ENCODE measurements at regions of chr20 and their contacts with region 1.

Region 1: GRCh38 chr20:17898548-17898994 is 70.0 kb downstream of the SNX5 start:
- DNase-seq: peak; percentile 64
- H3K4me3 ChIP-seq: no peak overlapping the region
- H3K27ac ChIP-seq: no peak overlapping the region
- H3K4me1 ChIP-seq: peaks cover 39% of the 10 kb centered on the region
- H3K27me3 ChIP-seq: no peaks in the 10 kb centered on the region
- CTCF ChIP-seq: peak; percentile 95

Region 2: GRCh38 chr20:17536944-17537444 is 361.6 kb before region 1 on chr20:
- intact Hi-C with region 1: loop called (anchors 10 kb)
- DNase-seq: peak; percentile 48
- H3K4me3 ChIP-seq: no peak overlapping the region
- H3K27ac ChIP-seq: no peak overlapping the region
- H3K4me1 ChIP-seq: peaks cover 1% of the 10 kb centered on the region
- H3K27me3 ChIP-seq: no peaks in the 10 kb centered on the region
- CTCF ChIP-seq: peak; percentile 93

Region 3: DNA sequence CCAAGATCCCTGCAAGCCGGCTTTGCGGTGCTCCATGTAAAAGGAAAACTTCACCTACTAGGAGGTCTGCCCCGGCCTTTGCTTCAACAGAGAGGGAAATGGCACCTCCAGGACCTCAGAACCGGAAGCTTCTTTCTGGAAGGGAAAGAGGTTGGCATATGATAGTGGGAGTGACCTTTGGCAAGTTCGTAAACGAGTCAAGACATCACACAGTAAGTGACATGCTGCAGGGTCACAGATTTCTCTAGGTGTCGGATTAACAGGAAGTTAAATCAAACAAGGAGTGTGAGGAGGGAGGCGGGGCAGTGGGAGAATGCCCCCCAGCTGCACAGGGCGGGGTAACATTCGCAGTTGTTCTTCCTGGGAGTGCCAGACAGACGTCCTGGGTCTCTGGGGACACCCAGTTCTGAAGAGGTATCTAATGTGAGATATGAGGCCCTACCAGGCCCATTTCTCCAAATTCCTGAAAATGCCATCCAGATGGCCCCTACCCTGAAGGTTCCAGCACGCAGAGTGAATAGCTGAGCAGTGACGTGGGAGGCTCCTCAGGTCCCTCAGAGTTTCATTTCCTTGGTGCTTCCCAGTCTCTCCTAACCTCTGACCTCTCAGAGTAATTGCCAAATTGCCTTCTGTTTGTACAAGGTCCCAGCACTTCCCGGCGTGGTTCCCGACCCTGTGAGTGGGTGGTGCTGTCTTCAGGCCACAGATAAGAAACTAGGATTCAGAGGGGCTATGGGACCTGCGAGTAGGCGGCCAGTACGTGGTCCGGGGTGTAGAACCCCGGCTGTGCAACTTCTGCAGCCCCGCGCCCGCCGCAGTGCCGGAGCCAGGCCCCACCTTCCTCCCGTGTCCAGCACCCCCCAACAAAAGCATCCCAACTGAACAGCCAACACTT is 218.4 kb before region 1 on chr20:
- intact Hi-C with region 1: loop called (anchors 10 kb)
- DNase-seq: peak; percentile 43
- H3K4me3 ChIP-seq: peak overlapping the region; percentile 88
- H3K27ac ChIP-seq: peak overlapping the region; percentile 98
- H3K4me1 ChIP-seq: peaks cover 55% of the 10 kb centered on the region
- H3K27me3 ChIP-seq: no peaks in the 10 kb centered on the region
- CTCF ChIP-seq: no peak

Region 4: GRCh38 chr20:17928633-17929311 is 30.2 kb after region 1 on chr20:
- intact Hi-C with region 1: no loop called
- DNase-seq: no peak
- H3K4me3 ChIP-seq: no peak overlapping the region
- H3K27ac ChIP-seq: peak overlapping the region; percentile 37
- H3K4me1 ChIP-seq: peaks cover 20% of the 10 kb centered on the region
- H3K27me3 ChIP-seq: no peaks in the 10 kb centered on the region
- CTCF ChIP-seq: no peak

Measured in left ventricle myocardium inferior (tissue), 1 donor.